CD8-positive, alpha-beta T cell (primary cell): ENCODE measurements at regions of chr15 and their contacts with region 1.

Region 1: GRCh38 chr15:90931737-90932659 is at the start of gene HDDC3:
- DNase-seq: peak; percentile 75 to 95 (median 90)
- ATAC-seq: peak; percentile 58
- H3K4me3 ChIP-seq: peak within 1 kb of the TSS; percentile 89 to 95
- H3K4me3 Mint-ChIP-seq: peak within 1 kb of the TSS; percentile 99
- H3K27ac ChIP-seq: peak within 1 kb of the TSS; percentile 78 to 87
- H3K27ac Mint-ChIP-seq: peak within 1 kb of the TSS; percentile 99
- H3K4me1 ChIP-seq: peaks cover 55% of the 10 kb centered on the region
- H3K4me1 Mint-ChIP-seq: peaks cover 49% of the 10 kb centered on the region
- H3K27me3 ChIP-seq: no peaks in the 10 kb centered on the region
- H3K27me3 Mint-ChIP-seq: no peaks in the 10 kb centered on the region
- CTCF ChIP-seq: peak; percentile 96
- total RNA-seq, gene HDDC3: 5.1 to 6.0 TPM

Region 2: GRCh38 chr15:89893696-89894455 is 1038.1 kb before region 1 on chr15 and contains the start of gene AP3S2:
- CTCF ChIA-PET with region 1: no interaction called
- POLR2A ChIA-PET with region 1: no interaction called
- intact Hi-C with region 1: loop called (anchors 10 kb)
- DNase-seq: peak; percentile 78 to 93 (median 88)
- ATAC-seq: peak; percentile 92
- H3K4me3 ChIP-seq: peak within 1 kb of the TSS; percentile 80 to 91
- H3K4me3 Mint-ChIP-seq: peak within 1 kb of the TSS; percentile 93
- H3K27ac ChIP-seq: peak within 1 kb of the TSS; percentile 73 to 75
- H3K27ac Mint-ChIP-seq: peak within 1 kb of the TSS; percentile 95
- H3K4me1 ChIP-seq: peaks cover 18% of the 10 kb centered on the region
- H3K4me1 Mint-ChIP-seq: peaks cover 30% of the 10 kb centered on the region
- H3K27me3 ChIP-seq: no peaks in the 10 kb centered on the region
- H3K27me3 Mint-ChIP-seq: no peaks in the 10 kb centered on the region
- CTCF ChIP-seq: no peak
- total RNA-seq, gene AP3S2: 14.2 to 16.0 TPM

Region 3: GRCh38 chr15:90265271-90266060 is 666.5 kb before region 1 on chr15 and contains the start of gene NGRN:
- CTCF ChIA-PET with region 1: no interaction called
- POLR2A ChIA-PET with region 1: interaction called, 3 read pairs
- intact Hi-C with region 1: loop called (anchors 1 to 10 kb)
- DNase-seq: peak; percentile 84 to 95 (median 93)
- ATAC-seq: peak; percentile 81
- H3K4me3 ChIP-seq: peak within 1 kb of the TSS; percentile 79 to 86
- H3K4me3 Mint-ChIP-seq: peak within 1 kb of the TSS; percentile 94
- H3K27ac ChIP-seq: peak within 1 kb of the TSS; percentile 95 to 98
- H3K27ac Mint-ChIP-seq: peak within 1 kb of the TSS; percentile 98
- H3K4me1 ChIP-seq: peaks cover 43% of the 10 kb centered on the region
- H3K4me1 Mint-ChIP-seq: peaks cover 51% of the 10 kb centered on the region
- H3K27me3 ChIP-seq: no peaks in the 10 kb centered on the region
- H3K27me3 Mint-ChIP-seq: no peaks in the 10 kb centered on the region
- CTCF ChIP-seq: no peak
- total RNA-seq, gene NGRN: 57.8 to 62.0 TPM

Region 4: GRCh38 chr15:90648137-90649070 is 283.6 kb before region 1 on chr15:
- CTCF ChIA-PET with region 1: interaction called, 18 read pairs
- POLR2A ChIA-PET with region 1: no interaction called
- intact Hi-C with region 1: loop called (anchors 1 to 2 kb)
- DNase-seq: peak in 8 of 9 experiments; percentile 33 to 81 (median 62)
- ATAC-seq: peak; percentile 89
- H3K4me3 ChIP-seq: no peak overlapping the region
- H3K4me3 Mint-ChIP-seq: peak overlapping the region; percentile 12
- H3K27ac ChIP-seq: no peak overlapping the region
- H3K27ac Mint-ChIP-seq: no peak overlapping the region
- H3K4me1 ChIP-seq: peaks cover 24% of the 10 kb centered on the region
- H3K4me1 Mint-ChIP-seq: peaks cover 20% of the 10 kb centered on the region
- H3K27me3 ChIP-seq: no peaks in the 10 kb centered on the region
- H3K27me3 Mint-ChIP-seq: no peaks in the 10 kb centered on the region
- CTCF ChIP-seq: peak; percentile 94

Region 5: DNA sequence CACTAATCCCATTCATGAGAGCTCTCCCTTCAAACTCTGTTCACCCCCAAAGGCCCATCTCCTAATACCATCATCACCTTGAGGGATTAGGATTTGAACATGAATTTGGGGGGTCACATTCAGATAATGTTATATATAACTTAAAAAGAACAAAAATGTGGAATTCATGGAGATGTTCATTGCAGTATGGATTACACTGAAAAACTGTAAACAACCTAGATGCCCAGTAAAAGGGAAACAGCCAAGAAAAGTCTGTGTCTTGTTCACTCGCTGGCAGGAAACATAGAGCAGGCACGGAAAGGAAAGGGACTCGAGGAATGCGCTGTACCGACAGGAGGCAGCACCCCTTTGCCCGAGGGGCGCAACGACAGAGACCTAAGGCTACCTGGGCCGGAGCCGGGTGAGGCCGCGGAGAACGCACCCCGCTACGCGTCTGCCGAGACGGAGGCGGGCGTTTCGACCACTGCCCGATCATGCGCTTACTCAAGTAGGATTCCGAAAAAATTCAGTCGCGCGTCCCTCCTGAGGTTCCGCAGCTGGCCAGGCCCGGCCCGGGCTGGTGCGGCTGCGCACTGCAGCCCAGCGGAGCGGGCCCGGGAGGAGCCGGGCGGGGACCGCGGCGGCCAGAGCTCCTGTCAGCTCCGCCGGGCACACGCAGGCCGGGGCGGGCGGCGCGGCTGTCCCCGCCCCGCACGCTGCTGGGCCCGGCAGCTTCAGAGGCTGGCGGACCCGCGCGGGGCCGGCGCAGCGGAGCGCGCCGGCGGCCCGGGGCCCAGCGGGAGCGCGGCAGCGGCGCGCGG is 29.8 kb before region 1 on chr15:
- CTCF ChIA-PET with region 1: interaction called, 262 read pairs
- POLR2A ChIA-PET with region 1: interaction called, 157 read pairs
- intact Hi-C with region 1: loop called (anchors 1 kb)
- DNase-seq: peak; percentile 42 to 88 (median 70)
- ATAC-seq: peak; percentile 69
- H3K4me3 ChIP-seq: peak overlapping the region; percentile 65 to 89
- H3K4me3 Mint-ChIP-seq: peak overlapping the region; percentile 92
- H3K27ac ChIP-seq: peak overlapping the region; percentile 65 to 73
- H3K27ac Mint-ChIP-seq: peak overlapping the region; percentile 93
- H3K4me1 ChIP-seq: peaks cover 15% of the 10 kb centered on the region
- H3K4me1 Mint-ChIP-seq: peaks cover 28% of the 10 kb centered on the region
- H3K27me3 ChIP-seq: no peaks in the 10 kb centered on the region
- H3K27me3 Mint-ChIP-seq: no peaks in the 10 kb centered on the region
- CTCF ChIP-seq: peak; percentile 84

Region 6: DNA sequence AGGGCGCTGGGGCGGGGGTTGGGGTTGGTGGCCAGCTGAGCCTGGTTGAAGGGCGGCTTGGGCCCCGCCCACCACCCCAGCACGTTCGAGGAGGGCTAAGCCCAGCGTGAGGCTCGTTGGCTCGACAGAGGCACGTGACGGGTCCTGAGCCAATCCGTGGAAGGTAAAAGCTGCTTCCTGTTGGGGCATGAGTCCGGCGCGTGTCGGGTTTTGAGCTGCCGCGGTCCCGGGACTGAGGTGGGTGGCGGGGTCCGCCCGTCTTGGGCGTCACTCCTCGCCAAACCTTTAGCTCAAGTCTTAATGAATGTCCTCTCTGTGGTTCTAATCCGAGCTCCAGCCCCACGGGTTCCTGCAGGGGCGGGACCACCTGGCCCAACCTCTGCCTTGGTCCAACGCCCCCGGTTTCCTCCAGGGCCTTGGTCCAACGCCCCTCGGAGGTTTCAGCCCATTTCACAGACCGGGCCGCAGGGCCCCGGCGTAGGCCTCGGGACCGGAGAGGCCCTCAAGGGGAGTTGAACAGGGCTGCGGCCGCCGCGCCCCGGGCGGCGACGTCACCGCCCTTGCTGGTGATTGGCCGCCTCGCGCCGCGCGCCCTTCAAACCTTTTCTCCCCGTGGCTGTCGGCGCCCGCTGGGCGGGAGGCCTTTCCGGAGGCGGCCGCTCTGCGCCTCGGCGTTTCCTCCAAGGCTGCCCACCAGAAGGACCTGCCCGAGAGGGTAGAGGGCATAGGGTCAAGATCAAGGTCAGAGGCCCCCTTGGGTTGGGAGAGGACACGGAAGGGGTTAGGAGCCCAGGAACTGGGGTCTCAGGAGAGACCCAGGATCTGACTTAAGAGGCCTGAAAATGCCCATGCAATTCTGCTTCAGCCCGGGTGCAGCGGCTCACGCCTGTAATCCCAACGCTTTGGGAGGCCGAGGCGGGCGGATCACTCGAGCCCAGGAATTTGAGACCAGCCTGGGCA is 23.0 kb after region 1 on chr15 and contains the start of gene RCCD1:
- CTCF ChIA-PET with region 1: interaction called, 160 read pairs
- POLR2A ChIA-PET with region 1: interaction called, 19 read pairs
- intact Hi-C with region 1: loop called (anchors 1 kb)
- DNase-seq: peak; percentile 63 to 94 (median 87)
- ATAC-seq: peak; percentile 94
- H3K4me3 ChIP-seq: peak within 1 kb of the TSS; percentile 87 to 97
- H3K4me3 Mint-ChIP-seq: peak within 1 kb of the TSS; percentile 87
- H3K27ac ChIP-seq: peak within 1 kb of the TSS; percentile 90 to 97
- H3K27ac Mint-ChIP-seq: peak within 1 kb of the TSS; percentile 92
- H3K4me1 ChIP-seq: peaks cover 16% of the 10 kb centered on the region
- H3K4me1 Mint-ChIP-seq: peaks cover 10% of the 10 kb centered on the region
- H3K27me3 ChIP-seq: no peaks in the 10 kb centered on the region
- H3K27me3 Mint-ChIP-seq: no peaks in the 10 kb centered on the region
- CTCF ChIP-seq: no peak
- total RNA-seq, gene RCCD1: 3.9 to 4.1 TPM

Region 7: DNA sequence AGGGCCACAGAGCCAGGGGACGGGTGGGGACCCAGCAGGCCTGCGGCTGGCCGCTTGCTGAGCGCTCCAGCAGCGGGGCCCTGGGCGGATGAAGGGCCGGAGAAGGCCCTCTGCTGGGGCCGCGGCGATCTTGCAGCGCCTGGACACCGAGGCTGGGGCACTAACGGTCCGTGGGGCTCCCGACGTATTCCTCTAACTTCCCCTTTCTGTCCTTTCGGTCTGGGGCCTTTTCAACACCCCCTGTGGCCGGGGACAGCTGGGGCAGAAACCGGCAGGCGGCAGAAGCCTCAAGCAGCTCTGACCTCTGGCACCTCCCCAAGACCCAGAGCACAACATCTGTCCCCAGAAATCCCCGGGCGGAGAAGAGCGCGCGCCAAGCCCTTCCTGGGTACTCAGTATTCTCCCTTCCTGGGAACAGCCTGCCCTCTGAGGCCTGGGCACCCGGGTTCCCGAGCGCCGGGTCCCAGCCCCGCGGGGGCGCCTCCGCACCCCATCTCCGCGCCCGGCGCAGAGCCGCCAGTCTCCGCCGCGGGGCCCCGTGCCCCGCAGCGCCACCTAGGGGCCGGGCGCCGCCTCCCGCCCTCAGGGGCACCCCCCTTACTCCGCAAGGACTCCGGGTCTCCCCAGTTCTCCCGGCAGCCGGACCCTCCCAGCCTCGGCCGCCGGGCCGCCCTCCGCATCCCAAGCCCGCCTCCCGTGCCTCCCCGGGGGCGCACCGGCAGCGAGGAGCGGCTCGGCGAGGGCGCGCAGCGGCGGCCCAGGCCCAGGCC is 920.9 kb after region 1 on chr15:
- CTCF ChIA-PET with region 1: no interaction called
- POLR2A ChIA-PET with region 1: no interaction called
- intact Hi-C with region 1: loop called in 1 of 2 experiments (anchors 10 kb)
- DNase-seq: peak; percentile 58 to 88 (median 72)
- ATAC-seq: peak; percentile 57
- H3K4me3 ChIP-seq: peak overlapping the region; percentile 59 to 62
- H3K4me3 Mint-ChIP-seq: peak overlapping the region; percentile 86
- H3K27ac ChIP-seq: peak overlapping the region; percentile 56 to 57
- H3K27ac Mint-ChIP-seq: peak overlapping the region; percentile 91
- H3K4me1 ChIP-seq: peaks cover 56% of the 10 kb centered on the region
- H3K4me1 Mint-ChIP-seq: peaks cover 58% of the 10 kb centered on the region
- H3K27me3 ChIP-seq: no peaks in the 10 kb centered on the region
- H3K27me3 Mint-ChIP-seq: no peaks in the 10 kb centered on the region
- CTCF ChIP-seq: peak; percentile 71